Mammary epithelial cell (primary cell): ENCODE measurements at regions of chr12 and their contacts with region 1.

Region 1: DNA sequence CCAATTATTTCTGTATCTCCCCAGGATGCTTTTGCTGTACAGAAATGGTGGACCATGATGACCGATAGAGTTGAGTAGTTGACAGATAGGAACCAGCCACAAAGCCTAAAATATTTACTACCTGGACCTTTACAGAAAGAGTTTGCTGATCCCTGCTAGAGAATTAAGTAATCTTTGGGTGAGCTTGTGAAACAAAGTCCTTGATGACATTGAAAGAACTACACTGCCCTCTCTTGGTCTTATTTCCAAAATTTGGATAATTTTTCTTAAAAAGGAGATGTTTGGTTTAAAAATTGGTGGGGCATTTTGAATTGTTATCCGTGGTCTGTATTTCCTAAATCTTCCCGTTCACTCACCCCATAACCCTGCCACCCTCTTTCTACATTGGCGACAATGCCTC is 13.7 kb upstream of the TCTN1 start:
- DNase-seq: peak; percentile 53
- H3K4me3 ChIP-seq: no peak overlapping the region
- H3K27ac ChIP-seq: no peak overlapping the region
- H3K4me1 ChIP-seq: no peaks in the 10 kb centered on the region
- H3K27me3 ChIP-seq: no peaks in the 10 kb centered on the region
- CTCF ChIP-seq: peak; percentile 13 to 42

Region 2: DNA sequence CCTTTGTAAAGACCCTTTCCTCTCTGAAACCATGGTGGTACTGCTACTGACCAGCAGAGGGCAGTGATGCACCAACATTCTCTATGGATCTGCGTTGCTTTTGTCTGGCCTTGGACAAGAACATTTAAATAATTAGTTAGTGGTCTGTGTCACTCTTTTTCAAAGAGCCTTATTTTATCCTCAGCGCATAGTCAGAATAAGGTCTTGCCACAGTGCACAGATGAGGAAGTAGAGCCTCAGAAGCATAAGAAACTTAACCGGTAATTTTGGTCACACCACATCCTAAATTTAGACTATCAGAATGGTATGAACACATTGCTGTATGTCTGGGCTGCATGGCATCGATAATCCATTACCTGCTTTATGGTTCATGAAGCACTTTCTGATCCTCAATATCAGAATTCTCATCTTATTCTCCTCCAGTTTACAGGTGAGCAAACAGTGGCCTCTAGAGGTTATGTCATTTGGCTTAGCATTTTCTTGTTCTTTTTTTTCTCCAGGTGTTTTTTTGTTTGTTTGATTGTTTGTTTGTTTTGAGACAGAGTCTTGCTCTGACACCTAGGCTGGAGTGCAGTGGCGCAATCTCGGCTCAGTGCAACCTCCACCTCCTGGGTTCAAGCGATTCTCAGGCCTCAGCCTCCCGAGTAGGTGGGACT is 499.8 kb before region 1 on chr12:
- CTCF ChIA-PET with region 1: no interaction called
- dilution Hi-C with region 1: no loop called
- in situ Hi-C with region 1: no loop called
- intact Hi-C with region 1: loop called (anchors 1 kb)
- DNase-seq: peak; percentile 32
- H3K4me3 ChIP-seq: no peak overlapping the region
- H3K27ac ChIP-seq: no peak overlapping the region
- H3K4me1 ChIP-seq: peaks cover 3% of the 10 kb centered on the region
- H3K27me3 ChIP-seq: no peaks in the 10 kb centered on the region
- CTCF ChIP-seq: peak; percentile 92 to 97

Region 3: GRCh38 chr12:110468212-110469048 is 131.8 kb before region 1 on chr12 and contains the starts of genes FAM216A and GPN3:
- CTCF ChIA-PET with region 1: interaction called, 5 read pairs
- dilution Hi-C with region 1: loop called (anchors 5 kb)
- in situ Hi-C with region 1: no loop called
- intact Hi-C with region 1: loop called (anchors 1 kb)
- DNase-seq: peak; percentile 99
- H3K4me3 ChIP-seq: peak within 1 kb of the TSS; percentile 71 to 85 (median 83)
- H3K27ac ChIP-seq: peak within 1 kb of the TSS; percentile 86
- H3K4me1 ChIP-seq: peaks cover 13% of the 10 kb centered on the region
- H3K27me3 ChIP-seq: no peaks in the 10 kb centered on the region
- CTCF ChIP-seq: no peak
- total RNA-seq, gene FAM216A: 5.2 to 13.5 TPM
- total RNA-seq, gene GPN3: 12.3 to 19.5 TPM

Region 4: DNA sequence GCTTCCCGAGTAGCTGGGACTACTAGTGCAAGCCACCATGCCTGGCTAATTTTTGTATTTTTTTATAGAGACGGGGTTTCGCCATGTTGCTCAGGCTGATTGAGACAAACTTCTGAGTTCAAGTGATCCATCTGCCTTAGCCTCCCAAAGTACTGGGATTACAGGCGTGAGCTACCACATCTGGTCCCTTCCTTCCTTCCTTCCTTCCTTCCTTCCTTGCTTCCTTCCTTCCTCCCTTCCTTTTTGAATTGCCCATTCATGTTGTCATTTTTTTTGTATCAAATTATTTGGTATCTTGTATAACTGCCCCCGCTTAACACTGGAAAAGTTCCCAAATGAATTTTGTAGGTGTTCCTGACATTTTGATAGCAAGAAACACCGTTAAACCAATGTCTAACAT is 86.4 kb before region 1 on chr12:
- CTCF ChIA-PET with region 1: interaction called, 5 read pairs
- dilution Hi-C with region 1: no loop called
- in situ Hi-C with region 1: loop called (anchors 5 kb)
- intact Hi-C with region 1: loop called (anchors 1 kb)
- DNase-seq: no peak
- H3K4me3 ChIP-seq: no peak overlapping the region
- H3K27ac ChIP-seq: no peak overlapping the region
- H3K4me1 ChIP-seq: no peaks in the 10 kb centered on the region
- H3K27me3 ChIP-seq: no peaks in the 10 kb centered on the region
- CTCF ChIP-seq: no peak

Region 5: DNA sequence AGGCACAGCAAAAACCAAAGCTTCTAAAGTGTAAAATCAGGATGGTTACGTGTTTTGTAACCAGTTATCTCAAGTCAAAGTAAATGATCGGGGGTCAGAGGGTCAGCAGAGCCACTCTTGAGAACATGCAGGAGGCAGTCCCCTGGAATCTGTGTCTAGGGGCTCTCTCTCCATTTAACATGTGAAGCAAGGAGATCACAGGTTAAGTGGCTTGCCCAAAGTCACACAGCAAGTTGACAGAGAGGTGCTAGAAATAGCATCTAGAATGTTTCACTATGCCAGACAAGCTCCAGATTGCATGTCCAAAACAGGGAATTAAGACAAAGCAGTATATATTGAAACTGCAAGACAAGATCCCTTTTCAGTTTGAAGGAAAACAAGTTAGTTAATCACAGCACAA is 50.5 kb before region 1 on chr12:
- CTCF ChIA-PET with region 1: no interaction called
- dilution Hi-C with region 1: no loop called
- in situ Hi-C with region 1: loop called in 1 of 2 experiments (anchors 5 kb)
- intact Hi-C with region 1: loop called (anchors 1 kb)
- DNase-seq: no peak
- H3K4me3 ChIP-seq: no peak overlapping the region
- H3K27ac ChIP-seq: no peak overlapping the region
- H3K4me1 ChIP-seq: peaks cover 33% of the 10 kb centered on the region
- H3K27me3 ChIP-seq: no peaks in the 10 kb centered on the region
- CTCF ChIP-seq: no peak

Region 6: GRCh38 chr12:110577717-110578521 is 22.3 kb before region 1 on chr12:
- CTCF ChIA-PET with region 1: no interaction called
- dilution Hi-C with region 1: no loop called
- in situ Hi-C with region 1: no loop called
- intact Hi-C with region 1: no loop called
- DNase-seq: peak; percentile 99
- H3K4me3 ChIP-seq: peak overlapping the region; percentile 13 to 41 (median 32)
- H3K27ac ChIP-seq: peak overlapping the region; percentile 100
- H3K4me1 ChIP-seq: peaks cover 45% of the 10 kb centered on the region
- H3K27me3 ChIP-seq: no peaks in the 10 kb centered on the region
- CTCF ChIP-seq: no peak

Region 7: DNA sequence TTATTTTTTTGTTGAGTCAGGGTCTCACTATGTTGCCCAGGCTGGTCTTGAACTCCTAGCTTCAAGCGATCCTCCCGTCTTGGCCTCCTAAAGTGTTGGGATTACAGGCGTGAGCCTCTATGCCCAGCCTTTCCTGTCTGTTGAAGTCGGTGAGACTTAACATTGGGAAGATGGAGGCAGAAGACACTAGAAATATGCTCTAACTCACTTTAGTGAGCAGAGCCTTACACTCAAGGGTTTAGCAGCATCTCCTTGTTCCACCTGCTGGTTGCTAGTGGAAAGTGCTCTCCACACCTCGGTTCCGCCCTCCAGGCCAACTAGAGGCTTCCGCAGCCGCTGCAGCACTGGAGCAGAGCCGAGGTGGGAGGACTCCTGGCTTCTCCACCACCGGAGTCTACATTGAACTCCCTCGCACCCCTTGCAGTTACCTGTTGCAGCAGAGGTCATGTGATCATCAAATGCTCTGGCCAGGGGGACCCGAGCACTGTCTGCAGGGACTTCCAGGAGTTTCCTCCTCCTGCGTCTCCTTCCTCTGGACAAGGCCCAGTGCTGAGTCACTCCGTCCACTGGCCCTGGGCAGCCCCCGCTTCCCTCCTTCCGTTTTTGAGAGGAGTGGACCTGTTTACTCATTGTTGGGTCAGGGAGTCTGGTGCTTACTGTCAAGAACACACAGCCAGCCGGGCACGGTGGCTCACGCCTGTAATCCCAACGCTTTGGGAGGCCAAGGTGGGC is 98.1 kb after region 1 on chr12:
- CTCF ChIA-PET with region 1: no interaction called
- dilution Hi-C with region 1: no loop called
- in situ Hi-C with region 1: no loop called
- intact Hi-C with region 1: loop called (anchors 1 kb)
- DNase-seq: peak; percentile 76
- H3K4me3 ChIP-seq: no peak overlapping the region
- H3K27ac ChIP-seq: no peak overlapping the region
- H3K4me1 ChIP-seq: no peaks in the 10 kb centered on the region
- H3K27me3 ChIP-seq: no peaks in the 10 kb centered on the region
- CTCF ChIP-seq: peak; percentile 68 to 74

Region 8: GRCh38 chr12:110726708-110727369 is 126.6 kb after region 1 on chr12:
- CTCF ChIA-PET with region 1: no interaction called
- dilution Hi-C with region 1: no loop called
- in situ Hi-C with region 1: no loop called
- intact Hi-C with region 1: no loop called
- DNase-seq: no peak
- H3K4me3 ChIP-seq: no peak overlapping the region
- H3K27ac ChIP-seq: no peak overlapping the region
- H3K4me1 ChIP-seq: no peaks in the 10 kb centered on the region
- H3K27me3 ChIP-seq: no peaks in the 10 kb centered on the region
- CTCF ChIP-seq: no peak

Region 9: GRCh38 chr12:110888256-110888991 is 288.2 kb after region 1 on chr12:
- CTCF ChIA-PET with region 1: no interaction called
- dilution Hi-C with region 1: no loop called
- in situ Hi-C with region 1: no loop called
- intact Hi-C with region 1: loop called (anchors 1 kb)
- DNase-seq: no peak
- H3K4me3 ChIP-seq: no peak overlapping the region
- H3K27ac ChIP-seq: no peak overlapping the region
- H3K4me1 ChIP-seq: peaks cover 9% of the 10 kb centered on the region
- H3K27me3 ChIP-seq: no peaks in the 10 kb centered on the region
- CTCF ChIP-seq: no peak